Activated T-helper 1 cell treated with anti-CD3 and anti-CD28 coated beads, Interleukin-12 subunit alpha, Interleukin-12 subunit beta, Interleukin-2, Interleukin-4 antibody, amounts not matched to agents 30 ng/mL and 10 ng/mL and 1 ng/mL, durations not matched to agents 14 hours and 24 hours and 36 hours (primary cell): ENCODE measurements at regions of chr18 and their contacts with region 1.

Region 1: GRCh38 chr18:58321986-58322385 is 278.0 kb downstream of the NEDD4L start:
- DNase-seq: peak; percentile 43
- H3K4me3 Mint-ChIP-seq: no peak overlapping the region
- H3K27ac Mint-ChIP-seq: no peak overlapping the region
- H3K4me1 Mint-ChIP-seq: peaks cover 10% of the 10 kb centered on the region
- H3K27me3 Mint-ChIP-seq: peaks cover 12% of the 10 kb centered on the region

Region 2: GRCh38 chr18:58180738-58181353 is 141.1 kb before region 1 on chr18:
- intact Hi-C with region 1: loop called (anchors 1 kb)
- DNase-seq: peak; percentile 11
- H3K4me3 Mint-ChIP-seq: no peak overlapping the region
- H3K27ac Mint-ChIP-seq: no peak overlapping the region
- H3K4me1 Mint-ChIP-seq: no peaks in the 10 kb centered on the region
- H3K27me3 Mint-ChIP-seq: peaks cover 9% of the 10 kb centered on the region

Region 3: DNA sequence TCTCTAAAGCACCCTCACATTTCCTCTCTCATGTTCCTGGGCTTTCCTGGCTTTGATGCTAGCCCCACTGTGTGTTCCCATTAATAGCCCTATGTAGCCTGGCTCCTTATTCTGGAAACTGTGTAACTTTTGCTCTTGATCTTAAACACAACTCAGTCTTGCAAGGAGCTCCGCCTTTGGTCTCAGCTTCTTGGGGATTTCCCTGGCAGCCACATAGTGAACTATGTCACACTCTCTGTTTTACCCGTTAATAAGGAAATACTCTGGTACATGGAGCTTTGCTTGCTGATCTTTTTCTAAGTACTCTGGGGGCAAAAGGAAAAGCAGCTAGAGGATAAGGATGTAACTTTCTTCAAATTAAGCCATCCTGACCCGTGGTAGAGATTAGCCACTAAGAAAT is 18.6 kb before region 1 on chr18:
- intact Hi-C with region 1: loop called (anchors 2 kb)
- DNase-seq: peak; percentile 18
- H3K4me3 Mint-ChIP-seq: no peak overlapping the region
- H3K27ac Mint-ChIP-seq: peak overlapping the region; percentile 27
- H3K4me1 Mint-ChIP-seq: peaks cover 16% of the 10 kb centered on the region
- H3K27me3 Mint-ChIP-seq: peaks cover 29% of the 10 kb centered on the region